ENCODE measurements at regions of chr4 and their contacts with region 1.

Region 1: GRCh38 chr4:80072744-80073472 is at the start of gene ANTXR2:
- DNase-seq: peak; percentile 98
- ATAC-seq: peak; percentile 98
- total RNA-seq, gene ANTXR2: 48.1 TPM

Region 2: GRCh38 chr4:80036949-80037685 is 35.8 kb before region 1 on chr4:
- intact Hi-C with region 1: loop called (anchors 2 kb)
- DNase-seq: no peak
- ATAC-seq: peak; percentile 97

Region 3: DNA sequence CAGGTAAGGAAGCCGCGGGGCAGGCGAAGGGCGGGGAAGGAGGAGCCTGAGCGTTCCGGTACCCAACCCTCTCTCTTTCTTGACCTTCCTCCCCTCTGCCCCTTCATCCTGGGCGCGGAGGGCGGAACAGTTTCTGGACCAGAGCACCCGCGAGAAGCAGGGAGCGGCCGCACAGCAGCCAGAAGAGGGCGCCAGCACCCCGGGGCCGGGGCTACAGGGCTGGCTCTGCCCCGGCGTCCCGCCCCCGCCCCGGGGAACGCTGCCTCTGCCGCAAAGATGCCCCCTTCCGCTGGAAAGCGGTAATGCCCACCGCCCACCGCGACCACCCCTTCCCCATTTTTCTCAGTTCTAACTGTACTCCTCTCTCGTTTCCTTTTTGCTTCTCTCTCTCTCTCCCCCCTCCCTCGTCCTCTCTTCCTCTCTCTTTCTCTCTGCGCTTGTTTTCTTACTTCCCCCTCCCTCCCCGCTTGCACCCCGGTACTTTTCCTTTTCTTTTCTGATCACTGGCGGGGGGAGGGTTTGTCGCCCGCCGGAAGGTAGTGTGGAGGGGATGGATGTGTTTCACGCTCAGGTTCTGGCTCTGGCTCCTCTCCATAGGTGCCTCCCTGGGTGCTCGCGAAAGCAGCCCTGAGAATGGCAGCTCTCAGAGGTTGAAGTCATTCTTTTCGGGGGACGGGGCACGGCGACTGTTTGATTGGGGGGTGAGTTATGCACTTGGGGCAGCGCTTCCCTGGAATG is 111.3 kb after region 1 on chr4:
- intact Hi-C with region 1: loop called (anchors 1 kb)
- DNase-seq: peak; percentile 95
- ATAC-seq: peak; percentile 98